CD8-positive, alpha-beta T cell (primary cell): ENCODE measurements at regions of chr6 and their contacts with region 1.

Region 1: DNA sequence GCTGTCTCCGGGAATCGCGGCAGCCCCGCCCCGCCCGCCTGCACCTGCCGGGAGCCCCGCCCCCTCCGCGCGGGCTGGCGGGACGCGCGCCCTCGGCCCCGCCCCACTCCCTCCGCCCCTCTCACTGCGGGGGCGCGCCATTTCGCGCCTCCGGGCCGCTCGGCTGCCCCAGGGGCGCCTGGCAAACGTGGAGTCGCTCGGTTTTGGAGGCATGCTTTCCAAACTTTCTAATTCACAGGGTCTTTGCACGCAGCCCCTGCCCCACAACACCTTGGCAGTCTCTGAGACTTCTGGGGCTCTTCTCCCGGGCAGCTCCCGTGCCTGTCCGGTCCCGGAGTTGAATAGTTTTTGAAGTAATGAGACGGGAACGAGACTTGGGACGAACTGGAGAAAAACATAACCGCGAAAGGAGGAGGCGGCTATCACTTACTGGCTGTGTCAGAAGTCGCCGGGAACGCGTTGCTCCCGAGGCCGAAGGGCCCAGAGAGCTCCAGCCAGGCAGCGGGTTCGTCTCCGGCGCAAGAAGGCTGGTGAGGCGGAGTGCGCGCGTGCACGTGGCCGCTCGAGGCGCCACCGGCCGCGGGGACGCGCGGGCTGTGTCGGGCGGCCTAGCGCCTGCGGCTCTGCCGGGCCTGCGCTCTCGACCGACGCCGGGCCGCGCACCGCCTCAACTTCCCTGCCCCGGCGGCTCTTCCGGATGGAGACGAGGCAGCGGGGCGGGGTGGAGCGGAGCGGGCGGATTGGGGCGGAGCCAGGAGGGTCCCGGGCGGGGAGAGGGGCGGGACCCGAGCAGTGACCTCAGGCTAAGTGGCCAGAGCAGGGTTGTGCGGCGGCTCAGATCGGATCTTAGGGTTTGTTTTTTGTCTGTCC is at the start of gene MCM9:
- DNase-seq: peak; percentile 76 to 95 (median 84)
- ATAC-seq: peak; percentile 87
- H3K4me3 ChIP-seq: peak within 1 kb of the TSS; percentile 96 to 97
- H3K4me3 Mint-ChIP-seq: peak within 1 kb of the TSS; percentile 91
- H3K27ac ChIP-seq: peak within 1 kb of the TSS; percentile 87 to 89
- H3K27ac Mint-ChIP-seq: peak within 1 kb of the TSS; percentile 90
- H3K4me1 ChIP-seq: peaks cover 7% of the 10 kb centered on the region
- H3K4me1 Mint-ChIP-seq: peaks cover 43% of the 10 kb centered on the region
- H3K27me3 ChIP-seq: no peaks in the 10 kb centered on the region
- H3K27me3 Mint-ChIP-seq: no peaks in the 10 kb centered on the region
- CTCF ChIP-seq: no peak
- total RNA-seq, gene MCM9: 32.9 to 34.1 TPM

Region 2: DNA sequence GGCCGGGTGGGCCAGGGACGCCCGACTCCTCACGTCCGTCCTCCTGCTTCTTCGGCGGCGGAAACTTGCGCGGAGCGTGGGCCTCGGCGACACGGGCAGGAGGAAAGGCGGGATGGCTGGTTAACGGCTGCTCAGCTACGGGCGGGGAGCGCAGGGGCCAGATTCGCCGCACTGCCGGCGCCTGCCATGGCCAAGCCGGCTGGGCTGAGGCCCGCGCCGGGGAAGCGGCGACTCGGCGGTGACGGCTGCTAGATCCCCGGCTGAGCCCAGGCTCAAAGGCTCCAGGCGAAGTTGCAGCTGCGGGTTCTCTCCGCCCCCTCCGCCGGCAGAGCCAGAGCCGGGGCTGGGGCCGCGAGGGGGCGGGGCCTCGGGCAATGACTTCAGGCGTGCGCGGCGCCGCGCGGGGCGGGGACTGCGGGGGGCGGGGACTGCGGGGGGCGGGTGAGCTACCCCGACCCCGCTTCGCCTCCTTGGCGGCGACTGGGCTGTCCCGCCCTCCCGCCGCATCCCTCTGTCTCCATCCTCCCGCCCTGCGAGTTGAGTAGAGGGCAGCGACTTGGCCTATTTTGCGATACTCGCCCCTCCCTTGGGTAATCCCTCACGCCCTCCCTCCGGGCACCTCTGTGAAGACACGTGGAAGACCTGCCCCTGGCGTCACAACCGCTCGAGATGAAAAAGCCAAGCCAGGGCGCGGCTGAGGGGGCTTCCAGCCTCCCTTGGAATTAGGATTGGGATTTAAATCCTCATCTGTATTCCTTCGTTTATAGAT is 283.2 kb before region 1 on chr6 and contains the start of gene CEP85L:
- CTCF ChIA-PET with region 1: no interaction called
- POLR2A ChIA-PET with region 1: interaction called, 3 read pairs
- intact Hi-C with region 1: loop called (anchors 1 to 2 kb)
- DNase-seq: peak; percentile 80 to 95 (median 91)
- ATAC-seq: peak; percentile 91
- H3K4me3 ChIP-seq: peak within 1 kb of the TSS; percentile 72 to 86
- H3K4me3 Mint-ChIP-seq: peak within 1 kb of the TSS; percentile 95
- H3K27ac ChIP-seq: peak within 1 kb of the TSS; percentile 79 to 81
- H3K27ac Mint-ChIP-seq: peak within 1 kb of the TSS; percentile 95
- H3K4me1 ChIP-seq: peaks cover 43% of the 10 kb centered on the region
- H3K4me1 Mint-ChIP-seq: peaks cover 51% of the 10 kb centered on the region
- H3K27me3 ChIP-seq: no peaks in the 10 kb centered on the region
- H3K27me3 Mint-ChIP-seq: no peaks in the 10 kb centered on the region
- CTCF ChIP-seq: no peak
- total RNA-seq, gene CEP85L: 86.2 to 89.0 TPM

Region 3: DNA sequence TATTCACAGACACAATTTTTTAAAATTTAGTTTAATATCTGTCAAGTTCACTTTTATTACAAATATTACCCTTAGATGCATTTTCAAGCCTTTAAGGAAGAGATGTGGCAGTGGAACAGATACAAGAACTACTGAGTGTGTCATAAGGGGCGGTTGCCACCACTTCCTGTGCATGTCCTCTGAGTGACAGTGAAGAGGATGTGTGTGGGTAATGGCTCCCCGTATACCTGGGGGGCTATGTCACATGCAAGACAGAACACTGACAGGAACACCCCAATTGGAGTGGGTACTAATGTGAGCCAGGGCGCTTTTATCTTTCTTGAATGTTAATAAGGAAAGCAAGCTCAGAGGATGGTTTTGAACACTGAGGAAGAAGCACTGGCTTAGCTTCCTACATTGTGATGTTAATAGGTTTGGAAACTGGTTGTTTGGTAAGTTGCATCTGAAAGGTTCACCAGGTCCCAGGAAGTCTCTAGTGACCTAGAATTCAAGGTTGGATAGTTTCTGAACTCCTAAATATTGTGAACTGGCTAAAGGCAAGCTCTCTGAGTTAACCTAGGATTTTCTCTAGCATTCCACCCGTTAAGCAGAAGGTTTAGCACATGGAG is 124.2 kb before region 1 on chr6:
- CTCF ChIA-PET with region 1: no interaction called
- POLR2A ChIA-PET with region 1: no interaction called
- intact Hi-C with region 1: loop called in 1 of 2 experiments (anchors 5 kb)
- DNase-seq: peak; percentile 28 to 90 (median 74)
- ATAC-seq: peak; percentile 95
- H3K4me3 ChIP-seq: peak overlapping the region in 1 of 2 experiments; percentile 15
- H3K4me3 Mint-ChIP-seq: peak overlapping the region; percentile 55
- H3K27ac ChIP-seq: peak overlapping the region; percentile 42 to 80
- H3K27ac Mint-ChIP-seq: peak overlapping the region; percentile 87
- H3K4me1 ChIP-seq: peaks cover 28% of the 10 kb centered on the region
- H3K4me1 Mint-ChIP-seq: peaks cover 55% of the 10 kb centered on the region
- H3K27me3 ChIP-seq: no peaks in the 10 kb centered on the region
- H3K27me3 Mint-ChIP-seq: no peaks in the 10 kb centered on the region
- CTCF ChIP-seq: no peak

Region 4: DNA sequence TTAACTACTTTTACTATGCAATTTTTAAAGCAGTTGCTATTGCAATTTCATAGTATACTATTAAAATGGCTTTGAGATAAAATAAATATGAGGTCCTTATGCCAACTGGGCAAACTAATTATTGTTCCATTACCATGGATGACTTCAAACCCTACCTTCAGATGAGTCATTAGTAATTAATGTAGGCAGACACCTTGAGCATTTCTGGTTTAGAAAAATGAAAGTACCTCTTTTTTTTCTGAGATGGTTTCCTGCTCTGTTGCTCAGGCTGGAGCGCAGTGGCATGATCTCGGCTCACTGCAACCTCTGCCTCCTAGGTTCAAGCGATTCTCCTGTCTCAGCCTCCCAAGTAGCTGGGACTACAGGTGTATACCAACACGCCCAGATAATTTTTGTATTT is 28.8 kb before region 1 on chr6:
- CTCF ChIA-PET with region 1: no interaction called
- POLR2A ChIA-PET with region 1: interaction called, 3 read pairs
- intact Hi-C with region 1: loop called in 1 of 2 experiments (anchors 1 kb)
- DNase-seq: no peak
- ATAC-seq: peak; percentile 38
- H3K4me3 ChIP-seq: no peak overlapping the region
- H3K4me3 Mint-ChIP-seq: no peak overlapping the region
- H3K27ac ChIP-seq: no peak overlapping the region
- H3K27ac Mint-ChIP-seq: peak overlapping the region; percentile 77
- H3K4me1 ChIP-seq: peaks cover 11% of the 10 kb centered on the region
- H3K4me1 Mint-ChIP-seq: peaks cover 60% of the 10 kb centered on the region
- H3K27me3 ChIP-seq: no peaks in the 10 kb centered on the region
- H3K27me3 Mint-ChIP-seq: no peaks in the 10 kb centered on the region
- CTCF ChIP-seq: no peak

Region 5: GRCh38 chr6:119078376-119079282 is 143.9 kb after region 1 on chr6 and contains the start of gene FAM184A:
- CTCF ChIA-PET with region 1: no interaction called
- POLR2A ChIA-PET with region 1: interaction called, 5 read pairs
- intact Hi-C with region 1: loop called (anchors 1 to 5 kb)
- DNase-seq: peak; percentile 50 to 86 (median 71)
- ATAC-seq: peak; percentile 74
- H3K4me3 ChIP-seq: peak within 1 kb of the TSS; percentile 58 to 66
- H3K4me3 Mint-ChIP-seq: peak within 1 kb of the TSS; percentile 94
- H3K27ac ChIP-seq: peak within 1 kb of the TSS; percentile 34 to 46
- H3K27ac Mint-ChIP-seq: peak within 1 kb of the TSS; percentile 91
- H3K4me1 ChIP-seq: peaks cover 25% of the 10 kb centered on the region
- H3K4me1 Mint-ChIP-seq: peaks cover 32% of the 10 kb centered on the region
- H3K27me3 ChIP-seq: no peaks in the 10 kb centered on the region
- H3K27me3 Mint-ChIP-seq: no peaks in the 10 kb centered on the region
- CTCF ChIP-seq: no peak
- total RNA-seq, gene FAM184A: 0.50 to 0.79 TPM

Region 6: GRCh38 chr6:119340796-119341487 is 406.2 kb after region 1 on chr6:
- CTCF ChIA-PET with region 1: no interaction called
- POLR2A ChIA-PET with region 1: no interaction called
- intact Hi-C with region 1: loop called in 1 of 2 experiments (anchors 5 kb)
- DNase-seq: no peak
- ATAC-seq: no peak
- H3K4me3 ChIP-seq: no peak overlapping the region
- H3K4me3 Mint-ChIP-seq: no peak overlapping the region
- H3K27ac ChIP-seq: no peak overlapping the region
- H3K27ac Mint-ChIP-seq: peak overlapping the region; percentile 52
- H3K4me1 ChIP-seq: peaks cover under 1% of the 10 kb centered on the region
- H3K4me1 Mint-ChIP-seq: peaks cover 53% of the 10 kb centered on the region
- H3K27me3 ChIP-seq: no peaks in the 10 kb centered on the region
- H3K27me3 Mint-ChIP-seq: no peaks in the 10 kb centered on the region
- CTCF ChIP-seq: no peak

Region 7: DNA sequence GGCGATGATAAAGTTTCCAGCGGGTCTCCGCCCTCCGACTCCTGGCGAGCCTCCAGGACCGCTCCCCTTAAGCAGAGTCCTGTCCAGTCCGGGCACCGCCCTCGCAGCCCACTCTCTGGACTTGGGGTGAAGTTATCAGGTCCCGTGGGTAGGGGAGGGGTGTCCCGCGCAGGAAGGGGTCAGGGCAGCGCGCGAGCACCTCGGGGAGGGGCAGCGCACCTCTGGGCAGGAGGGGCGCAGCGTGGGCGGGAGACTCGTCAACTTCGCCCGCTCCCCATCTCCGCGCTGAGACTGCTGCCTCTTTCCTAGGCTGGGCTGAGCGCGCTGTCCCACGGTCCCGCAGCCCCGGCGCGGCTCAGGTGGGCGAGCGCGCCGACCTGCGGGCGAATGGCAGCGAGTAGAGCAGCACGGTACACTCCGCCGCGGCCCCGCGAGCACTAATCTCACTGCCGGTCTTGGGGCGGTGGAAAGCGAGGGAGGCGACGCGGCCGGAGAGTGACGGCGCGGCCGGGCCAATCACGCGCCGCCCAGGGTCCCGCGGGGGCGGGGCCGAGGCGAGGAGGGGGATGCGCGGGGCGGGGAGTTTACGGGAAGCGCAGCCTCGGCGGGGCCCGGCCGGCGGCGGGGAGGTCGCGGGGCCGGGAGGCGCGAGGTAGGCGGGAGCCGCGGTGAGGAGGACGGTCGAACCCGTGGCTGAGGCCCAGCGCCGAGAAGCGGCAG is 414.8 kb after region 1 on chr6 and contains the start of gene MAN1A1:
- CTCF ChIA-PET with region 1: no interaction called
- POLR2A ChIA-PET with region 1: no interaction called
- intact Hi-C with region 1: loop called (anchors 1 to 5 kb)
- DNase-seq: peak; percentile 79 to 94 (median 88)
- ATAC-seq: peak; percentile 86
- H3K4me3 ChIP-seq: peak within 1 kb of the TSS; percentile 91 to 92
- H3K4me3 Mint-ChIP-seq: peak within 1 kb of the TSS; percentile 90
- H3K27ac ChIP-seq: peak within 1 kb of the TSS; percentile 65 to 67
- H3K27ac Mint-ChIP-seq: peak within 1 kb of the TSS; percentile 88
- H3K4me1 ChIP-seq: peaks cover 30% of the 10 kb centered on the region
- H3K4me1 Mint-ChIP-seq: peaks cover 45% of the 10 kb centered on the region
- H3K27me3 ChIP-seq: no peaks in the 10 kb centered on the region
- H3K27me3 Mint-ChIP-seq: no peaks in the 10 kb centered on the region
- CTCF ChIP-seq: no peak
- total RNA-seq, gene MAN1A1: 8.4 to 8.5 TPM